SK-N-SH (cell line): ENCODE measurements at regions of chr2 and their contacts with region 1.

Region 1: GRCh38 chr2:142989273-142990204 is 112.1 kb downstream of the KYNU start:
- DNase-seq: no peak
- H3K4me3 ChIP-seq: no peak overlapping the region
- H3K27ac ChIP-seq: no peak overlapping the region
- H3K4me1 ChIP-seq: no peaks in the 10 kb centered on the region
- H3K27me3 ChIP-seq: no peaks in the 10 kb centered on the region
- CTCF ChIP-seq: peak; percentile 71
- EP300 ChIP-seq: no peak
- RAD21 ChIP-seq: peak; percentile 60

Region 2: GRCh38 chr2:142395291-142395690 is 594.2 kb before region 1 on chr2:
- CTCF ChIA-PET with region 1: no interaction called
- POLR2A ChIA-PET with region 1: no interaction called
- DNase-seq: no peak
- H3K4me3 ChIP-seq: no peak overlapping the region
- H3K27ac ChIP-seq: no peak overlapping the region
- H3K4me1 ChIP-seq: no peaks in the 10 kb centered on the region
- H3K27me3 ChIP-seq: no peaks in the 10 kb centered on the region
- CTCF ChIP-seq: no peak
- EP300 ChIP-seq: no peak
- RAD21 ChIP-seq: no peak

Region 3: GRCh38 chr2:142951190-142952007 is 38.1 kb before region 1 on chr2:
- CTCF ChIA-PET with region 1: no interaction called
- POLR2A ChIA-PET with region 1: no interaction called
- DNase-seq: no peak
- H3K4me3 ChIP-seq: no peak overlapping the region
- H3K27ac ChIP-seq: no peak overlapping the region
- H3K4me1 ChIP-seq: no peaks in the 10 kb centered on the region
- H3K27me3 ChIP-seq: no peaks in the 10 kb centered on the region
- CTCF ChIP-seq: no peak
- EP300 ChIP-seq: no peak
- RAD21 ChIP-seq: no peak

Region 4: DNA sequence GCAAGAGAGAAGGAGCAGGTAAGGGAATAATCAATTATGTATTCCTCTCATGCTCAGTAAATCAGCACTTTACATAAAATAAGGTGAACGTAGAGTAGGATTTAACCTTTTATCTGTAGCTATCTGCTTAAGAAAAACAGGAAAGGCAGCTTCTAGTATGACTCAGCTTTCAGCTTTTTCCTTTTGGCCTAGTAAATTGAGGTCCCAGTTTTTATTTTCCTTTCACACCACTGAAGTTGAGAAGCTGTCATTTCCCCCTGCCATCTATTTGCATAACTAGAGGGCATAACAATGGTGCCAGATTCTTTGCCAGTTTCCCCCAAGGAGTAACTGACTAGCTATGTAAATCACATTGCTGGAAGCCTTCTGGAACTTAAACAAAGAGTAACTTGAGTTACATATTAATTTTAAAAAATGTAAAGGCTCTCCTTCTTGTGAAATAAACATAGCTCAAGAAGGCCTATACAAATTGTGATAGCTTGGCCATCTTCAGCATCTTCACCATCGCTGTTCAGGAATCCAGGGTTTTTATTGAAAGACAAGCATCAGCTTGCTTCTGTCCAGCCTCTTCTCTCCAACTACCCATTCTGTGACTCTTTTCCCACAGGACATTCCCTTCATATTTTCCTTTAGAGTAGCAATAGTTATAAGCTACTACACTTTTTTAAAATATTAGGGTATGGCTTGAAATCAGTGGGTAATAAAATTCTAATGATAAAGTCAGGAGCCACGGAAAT is 15.1 kb before region 1 on chr2:
- CTCF ChIA-PET with region 1: interaction called, 24 read pairs
- POLR2A ChIA-PET with region 1: no interaction called
- DNase-seq: no peak
- H3K4me3 ChIP-seq: no peak overlapping the region
- H3K27ac ChIP-seq: no peak overlapping the region
- H3K4me1 ChIP-seq: no peaks in the 10 kb centered on the region; a peak in 1 of 4 replicates
- H3K27me3 ChIP-seq: no peaks in the 10 kb centered on the region
- CTCF ChIP-seq: no peak
- EP300 ChIP-seq: no peak
- RAD21 ChIP-seq: no peak

Region 5: DNA sequence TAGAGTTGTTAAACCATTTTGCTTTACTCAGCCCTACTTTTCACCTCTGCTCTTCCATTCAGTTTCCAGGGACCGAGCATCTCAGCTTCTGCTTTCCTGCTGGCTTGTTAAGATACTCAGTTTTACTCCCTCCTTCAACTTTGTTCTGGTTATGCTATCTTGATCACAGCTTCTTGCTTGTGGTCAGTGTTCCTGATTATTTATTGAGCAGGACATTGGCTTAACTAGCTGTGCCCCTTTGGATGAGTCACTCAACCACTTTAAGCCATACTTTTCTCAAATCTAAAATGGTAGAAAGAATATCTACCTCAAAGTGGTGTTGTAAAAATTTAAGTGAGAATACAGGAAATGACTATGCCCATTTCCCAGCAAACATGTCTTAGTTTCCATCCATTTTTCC is 12.0 kb after region 1 on chr2:
- CTCF ChIA-PET with region 1: interaction called, 22 read pairs
- POLR2A ChIA-PET with region 1: no interaction called
- DNase-seq: no peak
- H3K4me3 ChIP-seq: no peak overlapping the region
- H3K27ac ChIP-seq: no peak overlapping the region
- H3K4me1 ChIP-seq: no peaks in the 10 kb centered on the region
- H3K27me3 ChIP-seq: no peaks in the 10 kb centered on the region
- CTCF ChIP-seq: no peak
- EP300 ChIP-seq: no peak
- RAD21 ChIP-seq: no peak